Left cardiac atrium (tissue), 4 donors: ENCODE measurements at regions of chr7 and their contacts with region 1.

Region 1: DNA sequence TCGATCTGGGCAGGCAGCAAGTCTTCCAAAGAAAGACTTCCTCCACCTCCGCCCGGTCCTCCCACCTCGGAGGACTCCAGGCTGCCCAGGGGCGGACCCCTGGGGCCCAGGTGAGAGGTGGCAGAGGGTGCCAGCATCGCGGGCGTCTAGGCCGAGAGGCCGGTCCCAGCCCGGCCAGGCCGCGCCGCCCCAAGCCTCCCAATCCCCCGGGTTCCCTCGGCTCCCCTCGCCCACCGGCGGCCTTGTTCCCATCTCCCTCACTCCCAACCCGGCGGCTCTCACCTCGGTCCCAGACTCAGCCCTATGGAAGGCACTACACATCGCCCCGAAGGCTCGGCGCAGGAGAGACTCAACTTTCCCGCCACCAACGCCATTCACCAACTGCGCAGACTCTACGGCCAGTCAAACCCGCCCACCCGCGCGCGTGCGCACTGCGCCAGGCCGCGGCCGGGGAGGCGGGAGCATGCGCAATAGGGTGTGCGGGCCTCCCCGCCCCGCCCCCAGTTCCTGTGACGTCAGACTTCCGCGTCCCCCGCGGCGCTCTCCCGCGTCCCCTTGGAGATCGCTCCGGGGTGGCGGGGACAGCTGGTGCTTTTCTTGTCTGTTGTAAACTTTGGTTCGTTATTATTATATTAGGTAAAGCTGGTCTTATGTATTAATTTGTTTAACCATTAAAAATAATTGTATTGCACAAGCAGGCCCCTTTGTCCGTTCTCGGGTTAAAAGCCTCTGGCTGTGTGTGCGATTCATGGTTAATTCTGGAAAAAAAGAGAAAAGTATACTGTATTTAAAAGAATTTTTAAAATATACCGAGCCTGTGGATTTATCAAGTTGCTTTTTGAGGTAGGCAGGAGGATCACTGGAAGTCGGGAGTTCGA is at the start of gene XRCC2:
- DNase-seq: peak; percentile 91
- ATAC-seq: peak; percentile 99 to 100
- total RNA-seq, gene XRCC2: 0.31 to 1.4 TPM

Region 2: DNA sequence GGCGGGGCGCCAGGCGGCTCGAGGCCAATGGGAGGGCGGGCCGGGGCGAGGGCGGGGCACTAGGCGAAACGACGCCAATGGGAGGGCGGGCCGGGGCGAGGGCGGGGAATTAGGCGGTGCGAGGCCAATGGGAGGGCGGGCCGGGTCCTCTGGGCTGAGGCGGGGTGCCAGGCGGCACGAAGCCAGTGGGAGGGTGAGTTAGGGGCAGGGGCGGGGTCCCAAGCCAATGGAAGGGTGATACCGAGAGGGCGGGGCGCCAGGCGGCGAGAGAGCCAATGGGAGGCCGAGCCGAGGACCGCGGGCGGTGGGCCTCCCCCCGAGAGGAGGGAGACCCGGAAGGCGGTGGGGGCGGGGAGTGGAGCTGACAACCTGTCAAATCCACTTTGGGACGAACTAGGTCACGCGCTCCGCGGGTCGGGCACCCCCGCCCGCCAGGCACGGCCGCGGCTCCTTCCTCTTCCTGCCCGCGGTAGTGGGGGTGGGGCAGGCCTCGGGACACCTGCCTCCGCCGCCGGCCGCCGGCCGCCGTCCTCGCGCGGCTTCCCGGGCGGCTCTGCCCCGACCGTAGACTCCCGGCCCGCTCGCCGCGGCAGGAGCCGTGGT is 212.2 kb before region 1 on chr7:
- intact Hi-C with region 1: loop called in 1 of 2 experiments (anchors 10 kb)
- DNase-seq: peak; percentile 100
- ATAC-seq: peak; percentile 95 to 96

Region 3: GRCh38 chr7:152759949-152760853 is 84.2 kb after region 1 on chr7:
- intact Hi-C with region 1: loop called in 1 of 2 experiments (anchors 10 kb)
- DNase-seq: peak; percentile 40
- ATAC-seq: peak; percentile 57 to 64